Activated CD4-positive, alpha-beta memory T cell treated with anti-CD3 and anti-CD28 coated beads for 36 hours (primary cell): ENCODE measurements at regions of chr19 and their contacts with region 1.

Region 1: GRCh38 chr19:3544742-3545668 is 6.0 kb downstream of the TEKTIP1 start:
- DNase-seq: peak; percentile 87
- H3K4me3 Mint-ChIP-seq: no peak overlapping the region
- H3K27ac Mint-ChIP-seq: peak overlapping the region; percentile 56
- H3K4me1 Mint-ChIP-seq: peaks cover 6% of the 10 kb centered on the region
- H3K27me3 Mint-ChIP-seq: no peaks in the 10 kb centered on the region

Region 2: DNA sequence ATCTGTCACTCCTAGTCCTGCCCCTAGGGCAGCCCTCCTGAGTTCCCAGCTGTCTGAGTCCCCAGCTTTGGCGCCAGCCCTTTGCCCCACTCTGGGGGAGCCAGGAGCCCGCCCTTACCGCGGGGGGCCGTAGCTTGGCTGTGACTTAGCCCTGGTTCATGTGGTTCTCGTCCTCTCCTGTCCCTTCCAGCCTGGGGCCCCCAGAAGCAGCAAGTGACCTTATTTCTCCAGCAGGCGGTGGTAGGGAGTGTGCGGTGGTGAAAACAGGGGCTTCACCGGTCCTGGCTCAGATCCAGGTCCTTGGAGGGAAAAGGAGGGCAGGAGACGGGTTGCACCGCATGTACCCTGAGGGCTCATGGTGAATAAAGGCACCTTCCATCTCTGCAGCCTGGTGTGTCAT is 48.2 kb after region 1 on chr19:
- CTCF ChIA-PET with region 1: interaction called, 17 read pairs
- POLR2A ChIA-PET with region 1: no interaction called
- intact Hi-C with region 1: no loop called
- DNase-seq: no peak
- H3K4me3 Mint-ChIP-seq: no peak overlapping the region
- H3K27ac Mint-ChIP-seq: no peak overlapping the region
- H3K4me1 Mint-ChIP-seq: no peaks in the 10 kb centered on the region
- H3K27me3 Mint-ChIP-seq: no peaks in the 10 kb centered on the region

Region 3: GRCh38 chr19:3618144-3618810 is 73.3 kb after region 1 on chr19:
- CTCF ChIA-PET with region 1: interaction called, 5 read pairs
- POLR2A ChIA-PET with region 1: no interaction called
- intact Hi-C with region 1: loop called (anchors 1 kb)
- DNase-seq: peak; percentile 68
- H3K4me3 Mint-ChIP-seq: no peak overlapping the region
- H3K27ac Mint-ChIP-seq: no peak overlapping the region
- H3K4me1 Mint-ChIP-seq: no peaks in the 10 kb centered on the region
- H3K27me3 Mint-ChIP-seq: no peaks in the 10 kb centered on the region

Region 4: DNA sequence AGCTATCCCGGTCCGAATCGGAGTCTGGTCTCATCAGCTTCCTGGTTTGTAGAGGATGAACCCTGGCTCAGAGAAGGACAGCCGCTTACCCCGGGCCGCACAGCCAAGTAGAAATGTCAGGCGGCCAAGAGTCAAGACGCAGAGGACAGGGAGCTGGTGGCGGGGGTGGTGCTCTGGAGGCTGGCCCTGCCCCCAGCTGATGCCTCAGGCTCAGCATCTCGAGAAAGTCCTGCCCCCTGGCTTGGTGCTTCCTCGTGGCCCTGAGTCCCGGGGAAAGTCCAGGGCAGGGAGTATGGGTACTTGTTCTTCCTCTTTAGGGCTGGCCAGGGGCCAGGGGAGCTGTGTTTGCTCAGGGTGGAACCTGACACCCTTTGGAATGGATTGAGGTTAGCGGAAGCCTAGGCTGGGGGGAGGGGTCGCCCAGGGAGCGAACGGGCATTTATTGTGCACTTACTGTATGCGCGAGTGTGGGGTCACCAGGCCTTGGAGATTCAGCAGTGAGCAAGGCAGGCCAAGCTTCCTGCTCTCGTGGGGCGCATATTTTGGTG is 165.3 kb after region 1 on chr19:
- CTCF ChIA-PET with region 1: interaction called, 4 read pairs
- POLR2A ChIA-PET with region 1: no interaction called
- intact Hi-C with region 1: loop called (anchors 1 kb)
- DNase-seq: no peak
- H3K4me3 Mint-ChIP-seq: no peak overlapping the region
- H3K27ac Mint-ChIP-seq: no peak overlapping the region
- H3K4me1 Mint-ChIP-seq: peaks cover 4% of the 10 kb centered on the region
- H3K27me3 Mint-ChIP-seq: peaks cover 2% of the 10 kb centered on the region